ENCODE measurements at regions of chr4 and their contacts with region 1.

Region 1: DNA sequence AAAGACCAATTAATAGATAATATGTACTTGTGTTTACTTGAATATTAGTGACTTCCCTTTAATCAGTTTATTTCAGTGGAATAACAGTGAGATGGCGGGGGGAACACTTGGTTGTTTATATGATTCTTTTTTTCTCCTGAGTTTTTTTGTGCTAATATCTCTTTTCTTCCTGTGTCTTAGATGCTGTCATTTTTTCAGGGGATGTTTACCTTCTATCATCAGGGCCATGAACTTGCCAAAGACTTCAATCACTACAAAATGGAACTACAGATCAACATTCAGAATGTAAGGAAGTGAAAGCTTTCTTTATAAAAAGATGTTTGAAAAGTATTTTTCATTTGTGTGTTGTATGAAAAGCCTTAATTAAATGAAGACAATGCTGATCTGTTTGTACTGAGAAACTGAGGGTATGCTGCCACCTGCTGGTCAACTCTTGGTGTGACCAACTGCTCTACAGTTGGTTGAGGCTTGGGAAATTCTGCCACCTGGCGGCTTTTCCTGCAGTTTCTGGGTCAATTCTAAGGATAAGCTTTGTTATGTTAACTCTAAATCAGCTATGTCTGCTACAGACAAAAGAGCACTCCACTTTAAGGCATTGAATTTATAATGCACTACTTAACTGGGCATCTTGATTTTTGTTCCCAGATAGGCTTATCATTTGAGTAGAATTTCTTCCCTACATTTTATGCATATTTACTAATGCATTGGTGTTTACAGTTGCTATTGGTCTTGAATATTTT is 134.8 kb downstream of the ARHGAP10 start:
- DNase-seq: peak; percentile 77 to 92 (median 87)
- H3K4me3 ChIP-seq: no peak overlapping the region
- H3K4me3 Mint-ChIP-seq: no peak overlapping the region
- H3K27ac ChIP-seq: no peak overlapping the region
- H3K27ac Mint-ChIP-seq: peak overlapping the region in 2 of 8 donors; percentile 14 to 29
- H3K4me1 ChIP-seq: no peaks in the 10 kb centered on the region
- H3K4me1 Mint-ChIP-seq: peaks cover 0 to 4% (median 0%) of the 10 kb centered on the region in 3 donors
- H3K27me3 ChIP-seq: no peaks in the 10 kb centered on the region
- H3K27me3 Mint-ChIP-seq: no peaks in the 10 kb centered on the region

Region 2: DNA sequence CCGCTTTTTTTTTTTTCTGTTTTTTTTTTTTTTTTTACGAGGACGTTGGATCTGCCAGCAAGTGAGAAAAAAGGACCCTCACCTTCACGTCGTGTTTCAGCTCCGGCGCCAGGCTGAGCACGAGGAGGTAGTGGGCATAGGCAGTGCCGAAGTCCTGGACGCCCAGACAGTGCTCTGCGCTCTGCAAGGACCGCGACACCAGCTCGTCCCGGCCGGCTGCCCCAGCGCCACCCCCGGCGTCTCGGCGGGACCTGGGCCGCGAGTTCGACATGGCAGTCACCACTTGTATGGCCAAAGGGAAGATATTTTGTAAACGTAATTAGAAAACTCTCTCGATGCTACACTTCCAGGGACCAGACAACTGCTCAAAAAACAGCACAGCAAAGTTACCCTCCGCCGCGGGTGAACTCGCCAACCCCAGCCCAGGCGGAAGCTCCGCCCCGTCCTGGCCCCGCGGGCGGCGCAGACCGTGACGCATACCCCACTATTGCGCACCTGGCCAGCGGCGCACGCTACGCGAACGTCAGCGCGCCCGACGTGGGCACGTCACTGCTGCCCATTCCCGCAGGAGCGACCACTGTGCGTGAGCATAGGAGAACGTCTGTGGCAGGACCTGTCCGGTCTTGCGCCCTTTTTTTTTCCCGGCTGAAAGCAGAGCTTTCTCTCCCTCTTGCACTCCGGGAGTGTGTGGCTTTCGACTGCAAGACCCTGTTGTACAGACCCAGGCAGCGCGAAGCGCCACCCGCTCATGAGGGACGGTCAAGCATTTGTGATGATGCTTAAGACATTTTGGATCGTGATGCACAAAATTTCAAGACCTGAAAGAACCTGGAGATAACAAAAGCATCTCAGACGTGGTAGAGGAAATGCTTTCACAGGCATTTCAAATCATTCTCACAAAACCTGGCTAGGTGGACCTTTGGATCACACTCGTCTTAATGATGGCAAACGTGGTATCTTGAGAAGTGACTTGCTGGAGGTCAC is 182.7 kb before region 1 on chr4 and contains the start of gene PRMT9:
- CTCF ChIA-PET with region 1: interaction called, 25 read pairs
- POLR2A ChIA-PET with region 1: no interaction called
- DNase-seq: peak; percentile 76 to 88 (median 85)
- H3K4me3 ChIP-seq: peak within 1 kb of the TSS; percentile 81
- H3K4me3 Mint-ChIP-seq: peak within 1 kb of the TSS; percentile 81 to 99 (median 96)
- H3K27ac ChIP-seq: peak within 1 kb of the TSS; percentile 93
- H3K27ac Mint-ChIP-seq: peak within 1 kb of the TSS; percentile 91 to 99 (median 98)
- H3K4me1 ChIP-seq: peaks cover 13% of the 10 kb centered on the region
- H3K4me1 Mint-ChIP-seq: peaks cover 30 to 45% (median 43%) of the 10 kb centered on the region in 3 donors
- H3K27me3 ChIP-seq: no peaks in the 10 kb centered on the region
- H3K27me3 Mint-ChIP-seq: peaks cover 0 to 10% of the 10 kb centered on the region in 2 donors
- total RNA-seq, gene PRMT9: 5.5 to 6.9 TPM

Region 3: GRCh38 chr4:147714575-147715401 is 151.9 kb before region 1 on chr4:
- CTCF ChIA-PET with region 1: interaction called, 89 read pairs
- POLR2A ChIA-PET with region 1: no interaction called
- DNase-seq: no peak
- H3K4me3 ChIP-seq: no peak overlapping the region
- H3K4me3 Mint-ChIP-seq: no peak overlapping the region
- H3K27ac ChIP-seq: no peak overlapping the region
- H3K27ac Mint-ChIP-seq: no peak overlapping the region
- H3K4me1 ChIP-seq: no peaks in the 10 kb centered on the region
- H3K4me1 Mint-ChIP-seq: no peaks in the 10 kb centered on the region
- H3K27me3 ChIP-seq: no peaks in the 10 kb centered on the region
- H3K27me3 Mint-ChIP-seq: peaks cover 1 to 6% of the 10 kb centered on the region in 2 donors

Region 4: GRCh38 chr4:147739239-147739823 is 127.4 kb before region 1 on chr4:
- CTCF ChIA-PET with region 1: interaction called, 10 read pairs
- POLR2A ChIA-PET with region 1: no interaction called
- DNase-seq: no peak
- H3K4me3 ChIP-seq: no peak overlapping the region
- H3K4me3 Mint-ChIP-seq: no peak overlapping the region
- H3K27ac ChIP-seq: no peak overlapping the region
- H3K27ac Mint-ChIP-seq: no peak overlapping the region
- H3K4me1 ChIP-seq: no peaks in the 10 kb centered on the region
- H3K4me1 Mint-ChIP-seq: peaks cover 33 to 45% (median 35%) of the 10 kb centered on the region in 3 donors
- H3K27me3 ChIP-seq: no peaks in the 10 kb centered on the region
- H3K27me3 Mint-ChIP-seq: peaks cover 0 to 2% of the 10 kb centered on the region in 2 donors

Region 5: DNA sequence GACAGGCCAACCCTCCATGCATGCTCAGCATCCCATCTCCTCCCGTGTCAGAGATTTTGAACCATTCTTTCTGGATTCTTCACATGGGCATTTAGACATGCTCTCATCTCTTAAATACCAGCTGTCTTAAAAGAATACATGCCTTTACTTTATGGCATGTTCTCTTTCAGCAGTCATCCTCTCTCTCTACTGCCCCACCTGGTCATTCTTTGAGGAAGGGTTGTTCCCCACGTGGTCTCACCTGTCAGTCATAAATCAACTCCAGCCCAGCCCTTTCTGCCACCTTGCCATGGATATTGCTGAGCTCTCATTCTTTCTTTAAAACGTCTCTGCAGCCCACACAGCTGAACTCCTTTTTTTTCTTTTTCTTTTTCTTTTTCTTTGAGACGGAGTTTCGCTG is 23.5 kb before region 1 on chr4:
- CTCF ChIA-PET with region 1: interaction called, 13 read pairs
- POLR2A ChIA-PET with region 1: no interaction called
- DNase-seq: peak in 1 of 5 donors; percentile 0
- H3K4me3 ChIP-seq: no peak overlapping the region
- H3K4me3 Mint-ChIP-seq: no peak overlapping the region
- H3K27ac ChIP-seq: no peak overlapping the region
- H3K27ac Mint-ChIP-seq: no peak overlapping the region
- H3K4me1 ChIP-seq: no peaks in the 10 kb centered on the region
- H3K4me1 Mint-ChIP-seq: no peaks in the 10 kb centered on the region
- H3K27me3 ChIP-seq: no peaks in the 10 kb centered on the region
- H3K27me3 Mint-ChIP-seq: no peaks in the 10 kb centered on the region

Region 6: GRCh38 chr4:147877308-147877771 is 10.6 kb after region 1 on chr4:
- CTCF ChIA-PET with region 1: interaction called, 12 read pairs
- POLR2A ChIA-PET with region 1: no interaction called
- DNase-seq: no peak
- H3K4me3 ChIP-seq: no peak overlapping the region
- H3K4me3 Mint-ChIP-seq: no peak overlapping the region
- H3K27ac ChIP-seq: no peak overlapping the region
- H3K27ac Mint-ChIP-seq: peak overlapping the region in 1 of 8 donors; percentile 13
- H3K4me1 ChIP-seq: no peaks in the 10 kb centered on the region
- H3K4me1 Mint-ChIP-seq: no peaks in the 10 kb centered on the region
- H3K27me3 ChIP-seq: no peaks in the 10 kb centered on the region
- H3K27me3 Mint-ChIP-seq: no peaks in the 10 kb centered on the region

Measured in CD8-positive, alpha-beta memory T cell (primary cell).